K562 (cell line): ENCODE measurements at regions of chr1 and their contacts with region 1.

Region 1: GRCh38 chr1:229227298-229227919 is 43.5 kb upstream of the RAB4A start:
- DNase-seq: peak; percentile 82 to 91 (median 88)
- ATAC-seq: peak; percentile 88
- H3K4me3 ChIP-seq: no peak overlapping the region
- H3K27ac ChIP-seq: no peak overlapping the region
- H3K4me1 ChIP-seq: no peaks in the 10 kb centered on the region; a peak in 1 of 5 replicates
- H3K27me3 ChIP-seq: peaks cover 25 to 46% of the 10 kb centered on the region in 2 experiments
- CTCF ChIP-seq: peak; percentile 87 to 96 (median 91)
- EP300 ChIP-seq: no peak
- POLR2A ChIP-seq: no peak
- RAD21 ChIP-seq: peak; percentile 90 to 94

Region 2: GRCh38 chr1:228664399-228664914 is 563.0 kb before region 1 on chr1:
- CTCF ChIA-PET with region 1: interaction called, 17 read pairs
- POLR2A ChIA-PET with region 1: interaction called, 3 read pairs
- in situ Hi-C with region 1: no loop called
- intact Hi-C with region 1: loop called (anchors 1 kb)
- DNase-seq: peak; percentile 68 to 81 (median 80)
- ATAC-seq: peak; percentile 84
- H3K4me3 ChIP-seq: no peak overlapping the region
- H3K27ac ChIP-seq: no peak overlapping the region
- H3K4me1 ChIP-seq: no peaks in the 10 kb centered on the region
- H3K27me3 ChIP-seq: no peaks in the 10 kb centered on the region
- CTCF ChIP-seq: peak; percentile 77 to 91 (median 79)
- EP300 ChIP-seq: no peak
- POLR2A ChIP-seq: no peak
- RAD21 ChIP-seq: peak; percentile 91 to 93

Region 3: DNA sequence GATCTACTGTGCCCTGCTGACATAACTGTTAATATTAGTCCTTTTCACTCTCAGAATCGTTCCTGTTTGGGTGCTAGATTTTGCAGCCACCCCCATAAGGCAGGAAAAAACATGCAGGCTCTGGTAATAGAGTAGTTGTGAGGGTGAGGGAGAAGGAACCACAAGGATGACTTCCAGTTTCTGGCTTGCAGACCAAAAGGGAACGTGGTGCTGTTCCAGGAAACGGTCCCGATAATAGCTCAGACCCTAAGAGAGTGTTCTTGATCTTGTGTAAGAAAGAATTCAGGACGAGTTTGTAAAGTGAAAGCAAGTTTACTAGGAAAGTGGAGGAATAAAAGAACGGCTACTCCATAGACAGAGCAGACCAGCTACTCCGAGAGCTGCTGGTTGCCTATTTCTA is 542.8 kb before region 1 on chr1:
- CTCF ChIA-PET with region 1: no interaction called
- POLR2A ChIA-PET with region 1: no interaction called
- in situ Hi-C with region 1: loop called (anchors 10 kb)
- intact Hi-C with region 1: no loop called
- DNase-seq: no peak
- ATAC-seq: no peak
- H3K4me3 ChIP-seq: no peak overlapping the region
- H3K27ac ChIP-seq: no peak overlapping the region
- H3K4me1 ChIP-seq: no peaks in the 10 kb centered on the region; a peak in 1 of 5 replicates
- H3K27me3 ChIP-seq: peaks cover 2 to 32% of the 10 kb centered on the region in 2 experiments; a peak in 3 of 5 replicates
- CTCF ChIP-seq: no peak
- EP300 ChIP-seq: no peak
- POLR2A ChIP-seq: no peak
- RAD21 ChIP-seq: no peak

Region 4: DNA sequence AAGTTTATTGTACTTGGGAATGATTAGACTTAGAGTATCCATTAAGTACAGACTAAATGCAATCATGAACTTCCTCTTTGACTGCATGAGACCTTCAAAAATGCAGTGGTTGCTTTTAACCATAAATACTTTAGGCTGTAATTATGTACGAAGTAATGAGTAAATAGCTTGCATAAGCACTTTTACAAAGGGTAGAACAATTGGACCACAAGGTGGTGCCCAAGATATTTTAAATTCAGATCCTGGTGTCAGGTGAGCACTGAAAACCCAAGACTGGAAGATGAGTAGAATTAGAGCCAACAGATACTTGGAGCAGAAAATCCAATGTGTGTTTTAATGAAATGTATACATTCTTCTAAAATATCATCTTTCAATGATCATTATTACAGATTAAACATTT is 535.5 kb before region 1 on chr1:
- CTCF ChIA-PET with region 1: interaction called, 8 read pairs
- POLR2A ChIA-PET with region 1: no interaction called
- in situ Hi-C with region 1: loop called (anchors 10 kb)
- intact Hi-C with region 1: loop called (anchors 1 kb)
- DNase-seq: peak in 2 of 4 experiments; percentile 35 to 44
- ATAC-seq: peak; percentile 68; the same call in 2 of the 3 replicates
- H3K4me3 ChIP-seq: no peak overlapping the region
- H3K27ac ChIP-seq: no peak overlapping the region
- H3K4me1 ChIP-seq: no peaks in the 10 kb centered on the region
- H3K27me3 ChIP-seq: peaks cover 2 to 18% of the 10 kb centered on the region in 2 experiments; a peak in 2 of 5 replicates
- CTCF ChIP-seq: peak in 2 of 3 experiments; percentile 49 to 59; a peak in 4 of 6 replicates
- EP300 ChIP-seq: no peak
- POLR2A ChIP-seq: no peak
- RAD21 ChIP-seq: peak; percentile 61 to 76

Region 5: GRCh38 chr1:229127301-229127700 is 100.1 kb before region 1 on chr1:
- CTCF ChIA-PET with region 1: no interaction called
- POLR2A ChIA-PET with region 1: no interaction called
- in situ Hi-C with region 1: no loop called
- intact Hi-C with region 1: loop called (anchors 5 kb)
- DNase-seq: no peak
- ATAC-seq: no peak; the same call in 2 of the 3 replicates
- H3K4me3 ChIP-seq: no peak overlapping the region
- H3K27ac ChIP-seq: no peak overlapping the region
- H3K4me1 ChIP-seq: no peaks in the 10 kb centered on the region
- H3K27me3 ChIP-seq: peaks cover 18 to 51% of the 10 kb centered on the region in 2 experiments
- CTCF ChIP-seq: no peak
- EP300 ChIP-seq: no peak
- POLR2A ChIP-seq: no peak
- RAD21 ChIP-seq: no peak